ENCODE measurements at regions of chrX and their contacts with region 1.

Region 1: DNA sequence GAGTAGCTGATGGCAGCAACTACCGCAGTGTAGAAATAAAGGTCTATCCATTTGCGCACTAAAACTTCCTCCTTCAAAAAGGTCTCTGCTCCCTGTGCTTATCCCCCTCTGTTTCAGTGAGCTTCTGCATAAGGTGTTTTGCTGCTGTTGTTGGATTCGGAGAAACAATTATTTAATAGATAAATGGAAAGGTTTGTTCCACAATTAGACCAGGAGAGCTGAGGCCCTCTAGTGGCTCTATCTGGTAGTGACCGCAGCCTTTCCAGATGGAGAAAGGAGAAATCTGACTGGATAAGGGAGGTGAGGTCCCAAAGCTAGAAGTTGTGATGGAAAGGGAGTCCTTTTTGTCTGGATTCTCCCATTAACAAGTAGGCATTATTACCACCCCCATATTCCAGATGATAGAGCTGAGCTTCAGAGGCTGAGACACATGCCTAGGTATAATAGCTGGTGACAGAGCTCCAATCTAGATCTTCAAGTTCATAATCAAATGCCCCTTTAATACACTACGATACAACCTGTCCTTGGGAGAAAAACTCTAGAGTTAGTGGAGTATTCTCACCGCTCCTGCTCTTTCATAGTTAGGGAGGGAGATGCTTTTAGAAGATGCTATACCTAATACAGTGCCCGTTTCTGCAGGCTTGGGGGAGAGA is 5.1 kb upstream of the GABRQ start:
- DNase-seq: peak in 1 of 2 donors; percentile 27
- ATAC-seq: no peak
- H3K4me3 ChIP-seq: no peak overlapping the region
- H3K27ac ChIP-seq: no peak overlapping the region
- H3K4me1 ChIP-seq: no peaks in the 10 kb centered on the region
- H3K27me3 ChIP-seq: peaks cover 0 to 20% (median 5%) of the 10 kb centered on the region in 3 donors
- CTCF ChIP-seq: peak; percentile 61

Region 2: DNA sequence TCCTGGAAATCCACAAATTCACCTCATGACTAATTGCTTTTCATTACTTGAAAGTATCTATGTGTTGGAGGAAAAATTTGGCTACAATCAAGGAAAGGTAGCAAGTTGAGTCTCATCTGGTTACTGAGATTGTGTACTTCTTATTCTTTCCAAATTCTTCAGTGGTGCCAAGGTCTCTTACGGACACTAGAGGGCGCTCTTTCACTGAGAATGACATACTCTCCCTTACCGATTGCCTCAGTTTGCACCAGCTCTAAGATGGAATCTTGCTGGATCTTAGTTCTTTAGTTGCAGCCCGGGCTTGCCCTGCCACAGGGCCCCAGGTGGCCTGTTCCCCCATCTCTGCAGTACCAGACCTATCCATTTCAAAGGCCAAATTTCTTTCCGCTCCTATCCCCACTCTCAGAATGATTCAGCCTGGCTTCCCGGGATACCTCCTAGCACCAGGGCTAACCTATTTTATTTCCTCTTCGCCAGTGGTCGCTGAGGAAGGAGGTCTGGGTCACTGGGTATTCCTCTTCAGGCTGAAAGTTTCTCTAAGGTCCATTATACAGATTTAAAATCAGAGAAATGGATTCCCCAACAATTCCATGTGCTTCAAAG is 1480.8 kb before region 1 on chrX:
- intact Hi-C with region 1: loop called in 1 of 2 experiments (anchors 10 kb)
- DNase-seq: no peak
- ATAC-seq: peak in 2 of 4 donors; percentile 46 to 69
- H3K4me3 ChIP-seq: no peak overlapping the region
- H3K27ac ChIP-seq: no peak overlapping the region
- H3K4me1 ChIP-seq: no peaks in the 10 kb centered on the region
- H3K27me3 ChIP-seq: peaks cover 0 to 11% (median 0%) of the 10 kb centered on the region in 3 donors
- CTCF ChIP-seq: peak; percentile 76

Region 3: GRCh38 chrX:151753313-151754041 is 879.1 kb before region 1 on chrX:
- intact Hi-C with region 1: loop called (anchors 2 to 5 kb)
- DNase-seq: peak; percentile 37 to 68
- ATAC-seq: peak; percentile 47 to 82 (median 78)
- H3K4me3 ChIP-seq: no peak overlapping the region
- H3K27ac ChIP-seq: no peak overlapping the region
- H3K4me1 ChIP-seq: no peaks in the 10 kb centered on the region
- H3K27me3 ChIP-seq: peaks cover 0 to 18% (median 0%) of the 10 kb centered on the region in 3 donors
- CTCF ChIP-seq: peak; percentile 63

Region 4: GRCh38 chrX:152614791-152615190 is 17.8 kb before region 1 on chrX:
- intact Hi-C with region 1: loop called in 1 of 2 experiments (anchors 2 kb)
- DNase-seq: no peak
- ATAC-seq: no peak
- H3K4me3 ChIP-seq: no peak overlapping the region
- H3K27ac ChIP-seq: no peak overlapping the region
- H3K4me1 ChIP-seq: no peaks in the 10 kb centered on the region
- H3K27me3 ChIP-seq: peaks cover 0 to 5% (median 0%) of the 10 kb centered on the region in 3 donors
- CTCF ChIP-seq: no peak

Measured in psoas muscle (tissue), 8 donors.